ENCODE measurements at regions of chr9 and their contacts with region 1.

Region 1: GRCh38 chr9:10354591-10354990 is 258.2 kb downstream of the PTPRD start:
- DNase-seq: no peak
- ATAC-seq: no peak

Region 2: DNA sequence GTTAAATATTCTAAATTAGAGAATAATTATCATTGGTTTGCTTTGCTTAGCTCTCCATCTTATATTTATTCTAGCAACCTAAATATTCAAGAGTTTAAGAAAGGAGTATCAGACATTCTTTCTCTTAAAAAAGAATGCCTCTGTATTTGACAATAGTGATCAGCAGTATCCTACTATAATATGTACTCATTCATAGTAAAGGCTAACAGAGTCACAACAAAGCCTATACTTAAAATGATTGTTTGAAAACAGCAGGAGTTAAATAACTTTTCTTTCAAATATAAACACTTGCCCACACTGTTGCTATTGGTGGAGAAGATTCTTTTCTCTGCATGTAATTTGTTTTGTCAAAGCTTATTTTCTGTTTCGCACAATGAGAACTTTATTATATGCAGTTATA is 79.8 kb after region 1 on chr9:
- intact Hi-C with region 1: loop called (anchors 10 kb)
- DNase-seq: no peak
- ATAC-seq: no peak